Activated CD4-positive, alpha-beta T cell treated with anti-CD3 and anti-CD28 coated beads for 36 hours (primary cell): ENCODE measurements at regions of chr4 and their contacts with region 1.

Region 1: GRCh38 chr4:118981839-118982381 is 93.3 kb downstream of the SYNPO2 start:
- DNase-seq: peak; percentile 73
- ATAC-seq: peak; percentile 60
- H3K4me3 Mint-ChIP-seq: no peak overlapping the region
- H3K27ac Mint-ChIP-seq: no peak overlapping the region
- H3K4me1 Mint-ChIP-seq: no peaks in the 10 kb centered on the region
- H3K27me3 Mint-ChIP-seq: peaks cover 7% of the 10 kb centered on the region

Region 2: DNA sequence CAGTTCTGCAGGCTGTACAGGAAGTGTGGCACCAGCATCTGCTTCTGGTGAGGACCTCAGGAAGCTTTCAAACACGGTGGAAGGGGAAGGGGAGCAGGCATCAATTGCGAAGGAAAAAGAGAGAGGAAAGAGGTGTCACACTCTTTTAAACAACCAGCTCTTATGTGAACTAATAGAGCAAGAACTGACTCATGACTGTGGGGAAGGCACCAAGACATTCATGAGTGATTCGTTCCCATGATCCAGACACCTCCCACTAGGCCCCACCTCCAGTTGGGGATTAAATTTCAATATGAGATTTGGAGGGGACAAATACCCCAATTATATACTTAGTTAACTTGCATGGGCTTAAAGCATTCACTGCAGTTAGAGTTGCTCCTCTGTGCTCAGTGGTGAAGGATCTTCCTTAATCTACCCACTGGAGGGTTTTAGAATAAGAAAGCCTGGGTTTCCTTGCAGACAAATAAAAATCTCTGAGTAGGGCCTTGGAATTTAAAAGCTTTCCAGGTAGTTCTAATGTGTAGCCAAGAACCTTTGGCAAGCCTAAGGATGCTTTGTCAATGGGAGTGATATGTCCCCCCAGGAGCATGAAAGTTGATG is 33.3 kb before region 1 on chr4:
- CTCF ChIA-PET with region 1: no interaction called
- POLR2A ChIA-PET with region 1: no interaction called
- intact Hi-C with region 1: no loop called
- DNase-seq: no peak
- ATAC-seq: no peak
- H3K4me3 Mint-ChIP-seq: no peak overlapping the region
- H3K27ac Mint-ChIP-seq: no peak overlapping the region
- H3K4me1 Mint-ChIP-seq: no peaks in the 10 kb centered on the region
- H3K27me3 Mint-ChIP-seq: no peaks in the 10 kb centered on the region

Region 3: GRCh38 chr4:118962540-118962939 is 19.4 kb before region 1 on chr4:
- CTCF ChIA-PET with region 1: interaction called, 11 read pairs
- POLR2A ChIA-PET with region 1: no interaction called
- intact Hi-C with region 1: no loop called
- DNase-seq: no peak
- ATAC-seq: no peak
- H3K4me3 Mint-ChIP-seq: no peak overlapping the region
- H3K27ac Mint-ChIP-seq: no peak overlapping the region
- H3K4me1 Mint-ChIP-seq: no peaks in the 10 kb centered on the region
- H3K27me3 Mint-ChIP-seq: no peaks in the 10 kb centered on the region

Region 4: GRCh38 chr4:119025916-119026661 is 44.2 kb after region 1 on chr4:
- CTCF ChIA-PET with region 1: no interaction called
- POLR2A ChIA-PET with region 1: no interaction called
- intact Hi-C with region 1: no loop called
- DNase-seq: no peak
- ATAC-seq: no peak
- H3K4me3 Mint-ChIP-seq: no peak overlapping the region
- H3K27ac Mint-ChIP-seq: no peak overlapping the region
- H3K4me1 Mint-ChIP-seq: no peaks in the 10 kb centered on the region
- H3K27me3 Mint-ChIP-seq: no peaks in the 10 kb centered on the region

Region 5: GRCh38 chr4:119286377-119287002 is 304.6 kb after region 1 on chr4:
- CTCF ChIA-PET with region 1: interaction called, 5 read pairs
- POLR2A ChIA-PET with region 1: no interaction called
- intact Hi-C with region 1: loop called (anchors 1 to 2 kb)
- DNase-seq: peak; percentile 47
- ATAC-seq: no peak
- H3K4me3 Mint-ChIP-seq: no peak overlapping the region
- H3K27ac Mint-ChIP-seq: no peak overlapping the region
- H3K4me1 Mint-ChIP-seq: peaks cover 12% of the 10 kb centered on the region
- H3K27me3 Mint-ChIP-seq: no peaks in the 10 kb centered on the region